ENCODE measurements at regions of chr1 and their contacts with region 1.

Region 1: GRCh38 chr1:23908493-23909341 is 4.4 kb downstream of the CNR2 start:
- DNase-seq: peak; percentile 82
- ATAC-seq: peak; percentile 55
- H3K4me3 ChIP-seq: peak overlapping the region; percentile 66
- H3K27ac ChIP-seq: peak overlapping the region; percentile 98
- H3K4me1 ChIP-seq: peaks cover 62% of the 10 kb centered on the region
- H3K27me3 ChIP-seq: no peaks in the 10 kb centered on the region
- CTCF ChIP-seq: no peak
- EP300 ChIP-seq: no peak; a peak in 1 of 4 replicates
- POLR2A ChIP-seq: peak; percentile 69; the same call in 1 of the 2 replicates
- RAD21 ChIP-seq: no peak

Region 2: DNA sequence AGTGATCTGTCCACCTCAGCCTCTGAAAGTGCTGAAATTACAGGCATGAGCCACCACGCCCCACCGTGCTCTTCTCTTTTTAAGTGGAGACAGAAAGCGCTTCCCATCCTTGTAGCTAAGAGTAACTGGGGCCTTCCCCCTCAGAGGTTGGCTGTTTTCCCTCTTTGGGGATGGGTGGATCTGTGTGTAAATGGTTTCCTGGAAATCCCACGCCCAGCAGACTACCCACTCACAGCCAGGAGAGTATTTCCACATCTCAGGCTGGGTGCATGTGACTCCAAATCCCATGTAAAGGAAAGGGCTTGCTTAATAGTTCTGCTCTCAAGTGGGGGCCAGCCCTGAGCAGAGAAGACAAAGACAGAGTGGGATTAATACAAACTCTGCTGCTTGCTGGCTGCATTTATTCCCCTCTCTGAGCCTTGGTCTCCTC is 464.6 kb before region 1 on chr1:
- CTCF ChIA-PET with region 1: no interaction called
- POLR2A ChIA-PET with region 1: no interaction called
- RAD21 ChIA-PET with region 1: no interaction called
- SMC1A ChIA-PET with region 1: no interaction called
- in situ Hi-C with region 1: no loop called
- intact Hi-C with region 1: no loop called
- DNase-seq: no peak
- ATAC-seq: no peak
- H3K4me3 ChIP-seq: no peak overlapping the region
- H3K27ac ChIP-seq: no peak overlapping the region
- H3K4me1 ChIP-seq: no peaks in the 10 kb centered on the region
- H3K27me3 ChIP-seq: peaks cover 0 to 3% of the 10 kb centered on the region in 2 experiments; a peak in 1 of 4 replicates
- CTCF ChIP-seq: no peak
- EP300 ChIP-seq: no peak
- POLR2A ChIP-seq: no peak
- RAD21 ChIP-seq: no peak

Region 3: GRCh38 chr1:23772049-23772853 is 136.5 kb before region 1 on chr1:
- CTCF ChIA-PET with region 1: interaction called, 19 read pairs
- POLR2A ChIA-PET with region 1: interaction called, 7 read pairs
- RAD21 ChIA-PET with region 1: interaction called, 11 read pairs
- SMC1A ChIA-PET with region 1: interaction called, 11 read pairs
- in situ Hi-C with region 1: no loop called
- intact Hi-C with region 1: no loop called
- DNase-seq: peak; percentile 27
- ATAC-seq: peak; percentile 99
- H3K4me3 ChIP-seq: no peak overlapping the region
- H3K27ac ChIP-seq: no peak overlapping the region
- H3K4me1 ChIP-seq: peaks cover 12% of the 10 kb centered on the region
- H3K27me3 ChIP-seq: no peaks in the 10 kb centered on the region
- CTCF ChIP-seq: peak; percentile 97 to 98 (median 98); a peak in 5 of 6 replicates
- EP300 ChIP-seq: no peak
- POLR2A ChIP-seq: no peak
- RAD21 ChIP-seq: peak; percentile 91

Region 4: DNA sequence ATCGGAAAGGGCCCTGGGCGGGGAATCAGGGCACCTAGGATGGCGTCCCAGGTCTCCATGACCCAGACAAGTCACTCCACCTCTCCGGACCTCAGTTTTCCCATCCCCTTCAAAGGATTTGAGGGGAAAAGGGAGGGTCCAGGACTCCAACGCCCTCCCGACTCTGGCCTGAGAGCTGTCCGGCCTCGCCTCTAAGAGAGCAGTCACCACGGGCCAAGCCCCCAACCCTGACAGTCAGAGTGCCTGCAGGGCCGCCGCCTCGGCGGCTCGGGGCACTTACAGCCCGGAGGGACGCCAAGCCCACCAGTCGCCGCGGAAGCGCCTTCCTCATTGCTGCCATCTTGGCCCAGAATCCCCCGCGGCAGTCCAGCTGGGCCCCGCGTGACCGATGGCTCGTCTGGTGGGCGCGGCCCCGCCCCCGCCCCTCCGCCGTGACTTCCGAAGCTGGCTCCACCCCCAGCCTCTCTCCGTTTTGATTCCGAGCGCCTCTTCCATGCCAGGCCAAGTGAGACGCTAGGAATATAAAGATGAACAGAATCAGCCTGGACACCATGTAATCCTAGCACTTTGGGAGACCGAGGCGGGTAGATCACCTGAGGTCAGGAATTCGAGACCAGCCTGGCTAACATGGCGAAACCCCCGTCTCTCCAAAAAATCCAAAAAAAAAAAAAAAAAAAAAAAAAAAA is 83.5 kb before region 1 on chr1 and contains the start of gene HMGCL:
- CTCF ChIA-PET with region 1: interaction called, 6 read pairs
- POLR2A ChIA-PET with region 1: interaction called, 22 read pairs
- RAD21 ChIA-PET with region 1: interaction called, 6 read pairs
- SMC1A ChIA-PET with region 1: interaction called, 5 read pairs
- in situ Hi-C with region 1: no loop called
- intact Hi-C with region 1: no loop called
- DNase-seq: peak; percentile 55
- ATAC-seq: peak; percentile 99
- H3K4me3 ChIP-seq: peak within 1 kb of the TSS; percentile 83
- H3K27ac ChIP-seq: peak within 1 kb of the TSS; percentile 82
- H3K4me1 ChIP-seq: no peaks in the 10 kb centered on the region
- H3K27me3 ChIP-seq: no peaks in the 10 kb centered on the region
- CTCF ChIP-seq: no peak
- EP300 ChIP-seq: no peak
- POLR2A ChIP-seq: peak; percentile 99
- RAD21 ChIP-seq: no peak
- polyA plus RNA-seq, gene HMGCL: 75.9 to 127 TPM

Region 5: GRCh38 chr1:23889074-23889473 is 19.6 kb before region 1 on chr1:
- CTCF ChIA-PET with region 1: interaction called, 12 read pairs
- POLR2A ChIA-PET with region 1: interaction called, 26 read pairs
- RAD21 ChIA-PET with region 1: interaction called, 40 read pairs
- SMC1A ChIA-PET with region 1: interaction called, 46 read pairs
- in situ Hi-C with region 1: no loop called
- intact Hi-C with region 1: no loop called
- DNase-seq: peak; percentile 50
- ATAC-seq: peak; percentile 92
- H3K4me3 ChIP-seq: peak overlapping the region; percentile 45; the same call in 1 of the 2 replicates
- H3K27ac ChIP-seq: peak overlapping the region; percentile 85
- H3K4me1 ChIP-seq: peaks cover 46% of the 10 kb centered on the region
- H3K27me3 ChIP-seq: no peaks in the 10 kb centered on the region
- CTCF ChIP-seq: no peak
- EP300 ChIP-seq: no peak
- POLR2A ChIP-seq: 0 out of 2 replicates have a peak, but pooled peaks have one; percentile 16
- RAD21 ChIP-seq: no peak

Region 6: DNA sequence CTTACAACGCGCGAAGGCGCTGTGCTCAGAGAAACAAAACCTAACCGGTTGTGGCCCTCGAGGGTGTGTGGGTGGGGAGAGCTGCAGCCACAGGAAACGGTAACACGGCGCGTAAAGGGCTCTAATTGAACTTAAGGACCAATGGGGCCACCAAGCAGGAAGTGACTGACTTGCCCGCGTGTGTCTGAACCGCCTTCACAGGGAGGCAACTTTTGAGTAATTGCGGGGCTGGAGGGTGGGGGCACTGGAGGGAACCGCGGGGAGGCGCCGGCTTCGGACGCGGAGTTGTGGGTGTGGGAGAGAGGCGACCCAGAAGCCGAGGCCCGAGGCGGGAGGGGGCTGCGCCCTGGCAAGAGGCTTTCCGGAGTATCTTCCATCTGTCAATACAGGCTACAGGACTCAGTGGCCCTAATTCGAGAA is 50.3 kb after region 1 on chr1:
- CTCF ChIA-PET with region 1: interaction called, 4 read pairs
- POLR2A ChIA-PET with region 1: interaction called, 16 read pairs
- RAD21 ChIA-PET with region 1: interaction called, 11 read pairs
- SMC1A ChIA-PET with region 1: interaction called, 8 read pairs
- in situ Hi-C with region 1: no loop called
- intact Hi-C with region 1: no loop called
- DNase-seq: peak; percentile 96
- ATAC-seq: peak; percentile 87
- H3K4me3 ChIP-seq: peak overlapping the region; percentile 87
- H3K27ac ChIP-seq: peak overlapping the region; percentile 97
- H3K4me1 ChIP-seq: peaks cover 31% of the 10 kb centered on the region
- H3K27me3 ChIP-seq: no peaks in the 10 kb centered on the region
- CTCF ChIP-seq: peak in 2 of 3 experiments; percentile 19 to 67; a peak in 3 of 6 replicates
- EP300 ChIP-seq: peak in 1 of 2 experiments; percentile 50; a peak in 1 of 4 replicates
- POLR2A ChIP-seq: peak; percentile 68
- RAD21 ChIP-seq: peak; percentile 41

Region 7: GRCh38 chr1:24003331-24003972 is 94.7 kb after region 1 on chr1:
- CTCF ChIA-PET with region 1: no interaction called
- POLR2A ChIA-PET with region 1: interaction called, 3 read pairs
- RAD21 ChIA-PET with region 1: interaction called, 10 read pairs
- SMC1A ChIA-PET with region 1: interaction called, 3 read pairs
- in situ Hi-C with region 1: no loop called
- intact Hi-C with region 1: no loop called
- DNase-seq: peak; percentile 81
- ATAC-seq: peak; percentile 91
- H3K4me3 ChIP-seq: no peak overlapping the region
- H3K27ac ChIP-seq: no peak overlapping the region
- H3K4me1 ChIP-seq: peaks cover 7% of the 10 kb centered on the region
- H3K27me3 ChIP-seq: no peaks in the 10 kb centered on the region
- CTCF ChIP-seq: no peak
- EP300 ChIP-seq: no peak
- POLR2A ChIP-seq: no peak
- RAD21 ChIP-seq: no peak

Region 8: DNA sequence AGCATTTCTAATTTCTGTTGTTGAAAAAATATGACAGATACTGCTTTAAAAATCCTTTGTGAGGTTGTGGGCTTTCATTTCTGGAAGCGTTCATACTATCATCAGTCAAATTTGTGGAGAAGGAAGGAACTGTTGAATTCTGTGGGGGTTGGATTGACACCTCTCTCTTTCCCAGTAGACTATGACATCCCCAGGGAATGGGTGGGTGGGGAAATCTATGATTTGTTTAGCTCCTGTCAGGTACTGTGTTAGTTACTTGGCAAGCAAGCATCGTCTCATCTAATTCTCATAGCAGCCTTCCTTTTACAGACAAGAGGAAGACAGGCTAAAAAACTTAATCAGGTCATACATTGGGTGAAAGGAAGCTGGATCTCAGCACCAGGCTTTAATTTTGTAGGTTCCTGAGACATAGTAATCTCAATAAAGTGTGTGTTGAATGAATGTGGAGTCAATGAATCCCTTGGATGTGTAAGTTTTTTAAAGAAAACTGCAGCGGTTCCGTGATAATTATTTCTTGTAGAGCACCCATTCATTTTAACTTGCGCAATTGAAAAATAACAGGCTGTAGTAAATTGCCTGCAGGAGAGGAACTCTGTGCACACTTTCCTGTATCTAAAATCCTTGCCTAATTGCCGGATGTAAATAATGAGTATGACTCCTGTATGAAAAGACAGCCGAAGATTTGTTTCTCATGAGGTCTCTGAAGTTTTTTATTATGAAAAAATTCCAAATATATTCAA is 142.7 kb after region 1 on chr1:
- CTCF ChIA-PET with region 1: no interaction called
- POLR2A ChIA-PET with region 1: no interaction called
- RAD21 ChIA-PET with region 1: no interaction called
- SMC1A ChIA-PET with region 1: no interaction called
- in situ Hi-C with region 1: no loop called
- intact Hi-C with region 1: no loop called
- DNase-seq: no peak
- ATAC-seq: no peak
- H3K4me3 ChIP-seq: no peak overlapping the region
- H3K27ac ChIP-seq: no peak overlapping the region
- H3K4me1 ChIP-seq: no peaks in the 10 kb centered on the region
- H3K27me3 ChIP-seq: no peaks in the 10 kb centered on the region
- CTCF ChIP-seq: no peak
- EP300 ChIP-seq: no peak
- POLR2A ChIP-seq: no peak
- RAD21 ChIP-seq: no peak

Measured in GM12878 (cell line).